Activated CD4-positive, alpha-beta T cell treated with anti-CD3 and anti-CD28 coated beads, Interleukin-2, amount 10 ng/mL, durations not matched to agents 24 days and 14 days (primary cell): ENCODE measurements at regions of chr16 and their contacts with region 1.

Region 1: DNA sequence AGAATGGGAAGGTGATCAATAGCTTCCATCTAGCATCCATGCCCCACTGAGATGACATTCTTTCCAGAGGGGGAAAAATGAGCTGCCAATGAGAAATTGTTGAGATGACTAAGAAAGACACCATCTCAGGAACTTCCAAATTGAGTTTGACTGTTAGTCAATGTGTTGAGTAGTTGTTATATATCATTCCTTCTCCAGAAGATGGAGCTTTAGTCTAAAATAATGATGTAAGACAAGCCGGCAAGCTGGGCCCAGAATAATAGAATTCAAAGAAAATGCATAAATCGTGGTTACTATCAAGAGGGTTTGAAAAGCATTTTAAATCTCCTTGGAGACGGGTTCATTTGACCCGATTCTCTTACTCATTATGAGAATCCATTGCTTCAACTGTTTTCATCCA is 71.0 kb upstream of the ATF7IP2 start:
- DNase-seq: peak; percentile 61
- H3K4me3 Mint-ChIP-seq: no peak overlapping the region
- H3K27ac Mint-ChIP-seq: no peak overlapping the region
- H3K4me1 Mint-ChIP-seq: peaks cover 15% of the 10 kb centered on the region
- H3K27me3 Mint-ChIP-seq: no peaks in the 10 kb centered on the region

Region 2: DNA sequence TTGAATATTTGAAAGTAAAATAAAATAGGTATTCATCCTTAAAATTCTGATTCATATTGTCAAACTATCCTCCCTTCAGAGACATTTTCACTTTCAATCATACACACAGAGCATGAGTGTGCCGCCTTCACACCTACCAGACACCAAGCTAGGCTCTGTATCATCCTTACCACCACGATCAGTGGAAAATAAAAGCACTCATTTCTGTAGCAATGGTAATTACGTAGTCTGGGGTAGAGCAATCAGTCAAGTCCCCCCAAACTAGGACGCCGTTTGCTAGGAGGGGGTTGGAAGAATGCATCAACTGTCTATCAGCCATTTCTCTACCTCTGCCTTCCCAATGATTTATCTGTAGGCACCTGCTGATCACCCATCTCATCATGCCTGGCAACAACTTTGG is 48.0 kb before region 1 on chr16:
- intact Hi-C with region 1: loop called (anchors 1 kb)
- DNase-seq: peak; percentile 58
- H3K4me3 Mint-ChIP-seq: no peak overlapping the region
- H3K27ac Mint-ChIP-seq: peak overlapping the region; percentile 47
- H3K4me1 Mint-ChIP-seq: peaks cover 3% of the 10 kb centered on the region
- H3K27me3 Mint-ChIP-seq: no peaks in the 10 kb centered on the region

Region 3: GRCh38 chr16:10297341-10298006 is 17.3 kb before region 1 on chr16:
- intact Hi-C with region 1: no loop called
- DNase-seq: no peak
- H3K4me3 Mint-ChIP-seq: no peak overlapping the region
- H3K27ac Mint-ChIP-seq: no peak overlapping the region
- H3K4me1 Mint-ChIP-seq: no peaks in the 10 kb centered on the region
- H3K27me3 Mint-ChIP-seq: no peaks in the 10 kb centered on the region